ENCODE measurements at regions of chr1 and their contacts with region 1.

Region 1: DNA sequence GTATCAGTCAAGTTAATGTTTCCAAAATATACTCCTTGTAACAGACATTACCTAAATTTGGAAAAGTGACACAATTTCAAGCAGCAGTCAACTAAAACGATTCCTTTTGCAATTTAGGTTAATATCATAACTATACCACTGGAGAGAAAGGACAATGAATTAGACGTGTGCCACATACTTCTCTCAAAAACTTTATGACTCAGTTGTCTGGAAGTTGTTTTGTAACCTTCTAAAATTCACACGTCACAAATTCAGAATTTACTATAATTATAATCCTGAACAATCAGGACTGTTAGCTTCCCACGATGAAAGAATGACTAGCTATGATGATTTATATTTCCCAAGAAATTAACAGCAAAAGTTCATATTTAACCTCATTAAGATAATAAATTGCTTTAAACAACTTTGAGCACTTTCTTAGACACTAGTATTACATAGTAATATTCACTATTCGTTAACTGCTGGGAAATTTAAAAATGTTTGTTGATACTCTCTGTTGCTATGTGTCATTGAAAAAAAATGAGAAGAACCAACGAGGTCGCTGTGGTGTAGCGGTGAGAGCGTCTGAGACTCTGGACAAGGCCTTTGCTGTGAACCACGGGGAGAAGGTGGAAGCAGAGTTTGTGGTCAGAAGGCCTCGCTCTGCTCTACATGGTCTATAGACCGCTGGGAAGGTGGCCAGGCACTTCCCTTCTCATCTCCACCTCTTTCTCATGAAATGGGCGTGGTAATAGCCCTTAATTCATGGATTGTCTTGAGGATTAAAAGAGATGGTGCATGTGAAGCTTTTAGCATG is 27.9 kb upstream of the BATF3 start:
- DNase-seq: peak; percentile 66
- H3K4me3 Mint-ChIP-seq: peak overlapping the region; percentile 13
- H3K27ac Mint-ChIP-seq: peak overlapping the region; percentile 92
- H3K4me1 Mint-ChIP-seq: peaks cover 66% of the 10 kb centered on the region
- H3K27me3 Mint-ChIP-seq: no peaks in the 10 kb centered on the region

Region 2: GRCh38 chr1:212712451-212713303 is 14.9 kb before region 1 on chr1:
- CTCF ChIA-PET with region 1: interaction called, 3 read pairs
- POLR2A ChIA-PET with region 1: interaction called, 23 read pairs
- intact Hi-C with region 1: loop called (anchors 2 kb)
- DNase-seq: peak; percentile 61
- H3K4me3 Mint-ChIP-seq: no peak overlapping the region
- H3K27ac Mint-ChIP-seq: peak overlapping the region; percentile 95
- H3K4me1 Mint-ChIP-seq: peaks cover 47% of the 10 kb centered on the region
- H3K27me3 Mint-ChIP-seq: no peaks in the 10 kb centered on the region

Measured in activated CD4-positive, alpha-beta memory T cell treated with anti-CD3 and anti-CD28 coated beads for 36 hours (primary cell).